AG04449 (cell line): ENCODE measurements at regions of chr6 and their contacts with region 1.

Region 1: GRCh38 chr6:88780714-88781389 is 182.6 kb downstream of the RNGTT start:
- DNase-seq: peak; percentile 5
- H3K4me3 ChIP-seq: no peak overlapping the region
- CTCF ChIP-seq: peak; percentile 75

Region 2: DNA sequence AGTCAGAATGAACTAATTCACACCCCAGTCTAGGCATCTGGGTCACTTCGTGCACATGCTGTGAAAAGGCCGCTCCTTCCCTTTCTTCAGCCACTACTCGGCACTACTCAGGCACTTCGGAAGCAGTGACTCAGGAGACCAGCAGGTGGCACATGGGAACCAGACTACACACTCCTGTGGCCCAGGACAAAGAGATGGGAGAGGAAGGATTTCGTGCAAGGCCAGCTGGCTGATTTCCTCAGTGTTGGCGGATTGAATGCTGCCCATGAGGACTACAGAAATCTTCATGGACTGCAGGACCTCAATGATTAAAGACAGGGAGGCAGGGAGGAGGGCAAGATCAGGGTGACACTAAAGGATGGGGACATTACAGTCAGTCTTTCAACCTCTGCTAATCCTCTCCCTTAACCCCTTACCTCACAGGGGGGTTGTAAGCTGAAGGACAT is 851.0 kb before region 1 on chr6:
- CTCF ChIA-PET with region 1: interaction called, 25 read pairs
- POLR2A ChIA-PET with region 1: no interaction called
- DNase-seq: peak; percentile 40
- H3K4me3 ChIP-seq: no peak overlapping the region
- CTCF ChIP-seq: peak; percentile 95

Region 3: GRCh38 chr6:88761237-88762031 is 19.4 kb before region 1 on chr6:
- CTCF ChIA-PET with region 1: interaction called, 12 read pairs
- POLR2A ChIA-PET with region 1: no interaction called
- DNase-seq: no peak
- H3K4me3 ChIP-seq: no peak overlapping the region
- CTCF ChIP-seq: no peak

Region 4: DNA sequence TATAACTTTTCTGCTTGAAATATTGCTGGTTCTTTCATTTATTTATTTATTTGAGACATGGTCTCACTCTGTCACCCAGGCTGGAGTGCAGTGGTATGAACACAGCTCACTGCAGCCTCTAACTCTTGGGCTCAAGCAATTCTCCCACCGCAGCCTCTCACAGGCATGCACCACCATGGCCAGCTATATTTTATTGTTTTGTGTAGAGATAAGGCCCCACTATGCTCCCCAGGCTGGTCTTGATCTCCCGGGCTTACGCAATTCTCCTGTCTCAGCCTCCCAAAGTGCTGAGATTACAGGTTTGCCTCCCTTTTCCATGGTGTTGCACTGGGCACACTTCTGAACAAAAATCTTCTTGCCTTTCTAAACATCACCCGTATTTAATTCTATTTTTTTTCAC is 221.7 kb after region 1 on chr6:
- CTCF ChIA-PET with region 1: no interaction called
- POLR2A ChIA-PET with region 1: no interaction called
- DNase-seq: no peak
- H3K4me3 ChIP-seq: no peak overlapping the region
- CTCF ChIP-seq: no peak